ENCODE measurements at regions of chr5 and their contacts with region 1.

Region 1: GRCh38 chr5:64958757-64959391 is 190.1 kb downstream of the CWC27 start:
- DNase-seq: no peak
- H3K4me3 ChIP-seq: no peak overlapping the region
- H3K27ac ChIP-seq: no peak overlapping the region
- H3K4me1 ChIP-seq: no peaks in the 10 kb centered on the region
- H3K27me3 ChIP-seq: no peaks in the 10 kb centered on the region
- CTCF ChIP-seq: peak; percentile 74

Region 2: GRCh38 chr5:64646169-64646568 is 312.7 kb before region 1 on chr5:
- CTCF ChIA-PET with region 1: no interaction called
- POLR2A ChIA-PET with region 1: no interaction called
- intact Hi-C with region 1: no loop called
- DNase-seq: no peak
- H3K4me3 ChIP-seq: no peak overlapping the region
- H3K27ac ChIP-seq: no peak overlapping the region
- H3K4me1 ChIP-seq: no peaks in the 10 kb centered on the region
- H3K27me3 ChIP-seq: no peaks in the 10 kb centered on the region
- CTCF ChIP-seq: no peak

Region 3: DNA sequence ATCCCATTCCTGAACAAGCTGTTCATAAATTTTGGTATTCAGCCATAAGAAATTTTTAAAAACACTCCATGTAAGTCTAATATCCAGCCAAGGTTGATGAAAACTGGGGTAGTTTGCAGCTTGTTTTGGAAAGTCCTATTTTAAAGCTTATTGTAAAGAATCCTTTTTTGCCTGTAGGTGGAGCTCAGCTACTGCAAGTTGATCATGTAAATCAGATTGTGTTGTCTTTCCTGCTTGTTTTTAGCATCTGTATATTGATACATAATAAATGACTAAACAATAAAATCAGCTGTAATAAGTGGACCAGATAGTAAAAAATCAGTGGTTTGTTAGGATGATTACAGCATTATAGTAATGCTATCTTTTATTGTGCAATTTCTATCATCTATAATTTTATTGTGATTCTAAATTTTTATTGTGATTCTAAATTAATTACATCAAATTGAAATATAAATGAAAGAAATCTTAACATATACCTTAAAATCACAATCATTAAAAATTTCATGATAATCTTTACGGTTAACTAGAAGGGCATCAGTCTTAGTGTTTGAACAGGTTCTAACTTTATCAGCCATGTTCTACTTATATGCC is 147.7 kb before region 1 on chr5:
- CTCF ChIA-PET with region 1: no interaction called
- POLR2A ChIA-PET with region 1: no interaction called
- intact Hi-C with region 1: loop called (anchors 5 kb)
- DNase-seq: no peak
- H3K4me3 ChIP-seq: no peak overlapping the region
- H3K27ac ChIP-seq: no peak overlapping the region
- H3K4me1 ChIP-seq: no peaks in the 10 kb centered on the region
- H3K27me3 ChIP-seq: no peaks in the 10 kb centered on the region
- CTCF ChIP-seq: peak; percentile 82

Region 4: GRCh38 chr5:64939522-64940510 is 19.1 kb before region 1 on chr5:
- CTCF ChIA-PET with region 1: no interaction called
- POLR2A ChIA-PET with region 1: no interaction called
- intact Hi-C with region 1: no loop called
- DNase-seq: peak; percentile 62 to 65
- H3K4me3 ChIP-seq: peak overlapping the region; percentile 36; the same call in 1 of the 2 replicates
- H3K27ac ChIP-seq: peak overlapping the region; percentile 62
- H3K4me1 ChIP-seq: no peaks in the 10 kb centered on the region
- H3K27me3 ChIP-seq: no peaks in the 10 kb centered on the region
- CTCF ChIP-seq: no peak

Region 5: DNA sequence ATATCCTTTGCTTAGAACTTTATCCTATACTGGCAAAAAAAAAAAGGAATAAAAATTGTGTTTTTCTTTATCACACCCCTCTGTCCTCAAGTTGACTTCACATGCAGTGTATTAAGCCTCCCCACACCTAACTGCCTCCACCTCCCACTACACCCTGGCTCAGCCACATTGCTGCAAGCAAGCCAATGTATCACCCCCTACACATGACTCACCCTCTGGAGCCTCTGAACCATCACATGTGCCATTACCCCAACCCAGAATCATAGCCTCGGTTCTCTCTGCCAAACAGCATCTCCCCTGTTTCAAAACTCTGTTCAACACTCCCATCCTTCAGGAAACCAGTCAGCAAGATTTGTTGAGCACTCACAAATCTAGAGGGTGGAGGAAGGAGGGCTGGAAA is 18.9 kb after region 1 on chr5:
- CTCF ChIA-PET with region 1: no interaction called
- POLR2A ChIA-PET with region 1: no interaction called
- intact Hi-C with region 1: no loop called
- DNase-seq: no peak
- H3K4me3 ChIP-seq: no peak overlapping the region
- H3K27ac ChIP-seq: no peak overlapping the region
- H3K4me1 ChIP-seq: no peaks in the 10 kb centered on the region
- H3K27me3 ChIP-seq: no peaks in the 10 kb centered on the region
- CTCF ChIP-seq: no peak

Region 6: DNA sequence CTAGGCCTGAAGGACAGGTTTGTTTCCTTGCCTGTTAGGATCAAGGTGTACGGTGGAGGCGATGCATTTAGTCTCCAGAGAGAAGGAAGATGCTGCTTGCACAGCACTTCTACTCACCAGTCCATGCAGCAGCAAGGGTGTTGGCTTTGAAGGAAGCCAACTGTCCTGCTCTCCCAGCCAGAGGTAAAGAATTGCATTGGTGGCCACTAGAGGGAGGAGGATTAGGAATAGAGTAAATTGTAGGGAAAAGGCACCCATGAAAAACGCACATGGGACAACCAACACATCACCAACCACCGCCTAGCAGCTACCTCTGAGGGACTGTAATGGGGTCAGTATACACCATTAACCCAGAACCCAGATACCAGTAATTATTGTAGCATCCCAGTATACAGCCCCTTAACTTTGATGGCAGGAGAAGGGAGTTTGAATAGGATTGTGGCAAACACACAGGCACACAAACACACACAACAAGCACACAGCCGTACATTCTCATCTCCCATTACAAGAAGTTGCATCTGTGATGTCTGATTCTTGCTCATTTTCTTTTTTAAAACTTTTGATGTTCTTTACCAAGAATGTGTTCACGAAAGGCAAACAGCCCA is 255.1 kb after region 1 on chr5:
- CTCF ChIA-PET with region 1: no interaction called
- POLR2A ChIA-PET with region 1: no interaction called
- intact Hi-C with region 1: loop called (anchors 10 kb)
- DNase-seq: no peak
- H3K4me3 ChIP-seq: no peak overlapping the region
- H3K27ac ChIP-seq: no peak overlapping the region
- H3K4me1 ChIP-seq: peaks cover 7% of the 10 kb centered on the region
- H3K27me3 ChIP-seq: no peaks in the 10 kb centered on the region
- CTCF ChIP-seq: peak; percentile 58; the same call in 1 of the 2 replicates